Activated B cell treated with CpG ODN at 0.5 μM for 24 hours (primary cell): ENCODE measurements at regions of chr2 and their contacts with region 1.

Region 1: GRCh38 chr2:100562732-100563720 is at the start of gene PDCL3:
- DNase-seq: peak; percentile 98
- ATAC-seq: peak; percentile 89
- H3K4me3 Mint-ChIP-seq: peak within 1 kb of the TSS; percentile 90
- H3K27ac Mint-ChIP-seq: peak within 1 kb of the TSS; percentile 98
- H3K4me1 Mint-ChIP-seq: peaks cover 21% of the 10 kb centered on the region
- H3K27me3 Mint-ChIP-seq: no peaks in the 10 kb centered on the region
- CTCF ChIP-seq: no peak
- total RNA-seq, gene PDCL3: 26.1 and 27.8 TPM in 2 replicates

Region 2: GRCh38 chr2:99154643-99155536 is 1408.1 kb before region 1 on chr2 and contains the starts of genes LIPT1 and TSGA10:
- CTCF ChIA-PET with region 1: no interaction called
- POLR2A ChIA-PET with region 1: no interaction called
- intact Hi-C with region 1: loop called (anchors 10 kb)
- DNase-seq: peak; percentile 92
- ATAC-seq: peak; percentile 91
- H3K4me3 Mint-ChIP-seq: peak within 1 kb of the TSS; percentile 90
- H3K27ac Mint-ChIP-seq: peak within 1 kb of the TSS; percentile 92
- H3K4me1 Mint-ChIP-seq: peaks cover 55% of the 10 kb centered on the region
- H3K27me3 Mint-ChIP-seq: no peaks in the 10 kb centered on the region
- CTCF ChIP-seq: no peak
- total RNA-seq, gene LIPT1: 15.1 and 18.1 TPM in 2 replicates
- total RNA-seq, gene TSGA10: 18.5 and 20.4 TPM in 2 replicates

Region 3: DNA sequence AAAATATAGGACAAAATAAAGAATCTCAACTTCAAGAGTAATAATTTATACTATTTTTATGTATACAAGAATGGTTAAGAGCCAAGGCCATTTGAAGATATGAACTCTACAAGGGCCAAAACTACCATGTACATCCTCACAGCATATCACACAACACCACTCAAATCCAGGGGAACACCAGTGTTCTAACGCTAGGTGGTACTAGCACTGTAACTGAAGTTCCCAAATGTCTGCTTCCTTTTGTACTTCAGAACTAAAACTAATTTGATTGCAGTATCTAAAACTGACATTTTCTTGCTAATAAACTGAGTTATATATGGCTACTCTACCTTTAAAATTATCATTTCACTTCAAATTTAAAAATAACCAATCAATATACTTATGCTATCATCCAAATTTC is 1120.2 kb before region 1 on chr2:
- CTCF ChIA-PET with region 1: no interaction called
- POLR2A ChIA-PET with region 1: no interaction called
- intact Hi-C with region 1: no loop called
- DNase-seq: no peak
- ATAC-seq: no peak
- H3K4me3 Mint-ChIP-seq: no peak overlapping the region
- H3K27ac Mint-ChIP-seq: no peak overlapping the region
- H3K4me1 Mint-ChIP-seq: no peaks in the 10 kb centered on the region
- H3K27me3 Mint-ChIP-seq: no peaks in the 10 kb centered on the region
- CTCF ChIP-seq: no peak

Region 4: GRCh38 chr2:100262555-100263320 is 300.3 kb before region 1 on chr2:
- CTCF ChIA-PET with region 1: interaction called, 3 read pairs
- POLR2A ChIA-PET with region 1: interaction called, 4 read pairs
- intact Hi-C with region 1: loop called (anchors 5 kb)
- DNase-seq: peak; percentile 51
- ATAC-seq: peak; percentile 76
- H3K4me3 Mint-ChIP-seq: no peak overlapping the region
- H3K27ac Mint-ChIP-seq: no peak overlapping the region
- H3K4me1 Mint-ChIP-seq: peaks cover 8% of the 10 kb centered on the region
- H3K27me3 Mint-ChIP-seq: no peaks in the 10 kb centered on the region
- CTCF ChIP-seq: peak; percentile 92

Region 5: GRCh38 chr2:100281521-100282438 is 281.2 kb before region 1 on chr2:
- CTCF ChIA-PET with region 1: no interaction called
- POLR2A ChIA-PET with region 1: no interaction called
- intact Hi-C with region 1: no loop called
- DNase-seq: no peak
- ATAC-seq: no peak
- H3K4me3 Mint-ChIP-seq: no peak overlapping the region
- H3K27ac Mint-ChIP-seq: no peak overlapping the region
- H3K4me1 Mint-ChIP-seq: no peaks in the 10 kb centered on the region
- H3K27me3 Mint-ChIP-seq: peaks cover 30% of the 10 kb centered on the region
- CTCF ChIP-seq: no peak

Region 6: GRCh38 chr2:100580367-100581276 is 17.6 kb after region 1 on chr2:
- CTCF ChIA-PET with region 1: interaction called, 8 read pairs
- POLR2A ChIA-PET with region 1: interaction called, 71 read pairs
- intact Hi-C with region 1: loop called (anchors 1 kb)
- DNase-seq: peak; percentile 50
- ATAC-seq: peak; percentile 79
- H3K4me3 Mint-ChIP-seq: peak overlapping the region; percentile 56
- H3K27ac Mint-ChIP-seq: peak overlapping the region; percentile 99
- H3K4me1 Mint-ChIP-seq: peaks cover 22% of the 10 kb centered on the region
- H3K27me3 Mint-ChIP-seq: no peaks in the 10 kb centered on the region
- CTCF ChIP-seq: no peak

Region 7: GRCh38 chr2:101001691-101002561 is 438.9 kb after region 1 on chr2 and contains the start of gene RPL31:
- CTCF ChIA-PET with region 1: no interaction called
- POLR2A ChIA-PET with region 1: interaction called, 38 read pairs
- intact Hi-C with region 1: loop called (anchors 1 kb)
- DNase-seq: peak; percentile 86
- ATAC-seq: peak; percentile 95
- H3K4me3 Mint-ChIP-seq: peak within 1 kb of the TSS; percentile 97
- H3K27ac Mint-ChIP-seq: peak within 1 kb of the TSS; percentile 95
- H3K4me1 Mint-ChIP-seq: peaks cover 38% of the 10 kb centered on the region
- H3K27me3 Mint-ChIP-seq: no peaks in the 10 kb centered on the region
- CTCF ChIP-seq: no peak
- total RNA-seq, gene RPL31: 1,828 and 2,370 TPM in 2 replicates

Region 8: GRCh38 chr2:101308432-101309210 is 745.6 kb after region 1 on chr2 and contains the start of gene RNF149:
- CTCF ChIA-PET with region 1: no interaction called
- POLR2A ChIA-PET with region 1: interaction called, 5 read pairs
- intact Hi-C with region 1: loop called (anchors 2 kb)
- DNase-seq: peak; percentile 97
- ATAC-seq: peak; percentile 79
- H3K4me3 Mint-ChIP-seq: peak within 1 kb of the TSS; percentile 85
- H3K27ac Mint-ChIP-seq: peak within 1 kb of the TSS; percentile 90
- H3K4me1 Mint-ChIP-seq: peaks cover 54% of the 10 kb centered on the region
- H3K27me3 Mint-ChIP-seq: no peaks in the 10 kb centered on the region
- CTCF ChIP-seq: no peak
- total RNA-seq, gene RNF149: 39.6 and 48.3 TPM in 2 replicates